Tibial artery (tissue), 4 donors: ENCODE measurements at regions of chr11 and their contacts with region 1.

Region 1: DNA sequence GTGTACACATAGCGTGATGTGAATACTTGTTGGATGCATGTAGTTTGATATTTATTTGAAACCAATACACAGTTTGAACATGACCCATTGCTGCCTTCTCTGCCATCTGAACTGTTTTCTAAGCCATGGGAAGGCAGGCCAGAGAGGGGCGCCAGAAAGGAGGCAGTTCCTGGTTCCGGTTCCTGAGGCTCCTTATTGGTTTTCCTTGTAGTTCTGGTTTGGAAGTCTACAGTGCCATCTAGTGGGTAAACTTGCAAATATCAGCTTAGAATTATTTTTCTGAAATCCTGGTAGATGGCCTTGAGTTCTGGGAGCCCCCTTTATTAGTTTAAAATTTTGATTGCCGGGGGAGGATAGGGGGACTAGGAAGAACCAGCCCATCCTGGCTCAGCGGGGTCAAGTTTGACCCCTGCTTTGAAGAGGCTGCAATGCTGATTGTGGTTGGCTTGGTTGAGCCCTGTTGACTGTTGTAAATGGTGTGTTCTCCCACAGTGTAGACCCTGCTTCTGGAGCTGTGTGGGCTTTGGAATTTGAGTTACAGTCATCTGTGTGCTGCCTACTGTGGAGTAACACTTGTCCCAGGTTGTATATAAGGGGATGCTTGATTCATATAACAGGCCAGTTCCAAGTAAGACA is 48.4 kb downstream of the GRAMD1B start:
- DNase-seq: no peak
- H3K4me3 ChIP-seq: no peak overlapping the region
- H3K27ac ChIP-seq: no peak overlapping the region
- H3K4me1 ChIP-seq: peaks cover 0 to 7% (median 0%) of the 10 kb centered on the region in 4 donors
- H3K27me3 ChIP-seq: no peaks in the 10 kb centered on the region
- CTCF ChIP-seq: peak; percentile 60 to 65

Region 2: DNA sequence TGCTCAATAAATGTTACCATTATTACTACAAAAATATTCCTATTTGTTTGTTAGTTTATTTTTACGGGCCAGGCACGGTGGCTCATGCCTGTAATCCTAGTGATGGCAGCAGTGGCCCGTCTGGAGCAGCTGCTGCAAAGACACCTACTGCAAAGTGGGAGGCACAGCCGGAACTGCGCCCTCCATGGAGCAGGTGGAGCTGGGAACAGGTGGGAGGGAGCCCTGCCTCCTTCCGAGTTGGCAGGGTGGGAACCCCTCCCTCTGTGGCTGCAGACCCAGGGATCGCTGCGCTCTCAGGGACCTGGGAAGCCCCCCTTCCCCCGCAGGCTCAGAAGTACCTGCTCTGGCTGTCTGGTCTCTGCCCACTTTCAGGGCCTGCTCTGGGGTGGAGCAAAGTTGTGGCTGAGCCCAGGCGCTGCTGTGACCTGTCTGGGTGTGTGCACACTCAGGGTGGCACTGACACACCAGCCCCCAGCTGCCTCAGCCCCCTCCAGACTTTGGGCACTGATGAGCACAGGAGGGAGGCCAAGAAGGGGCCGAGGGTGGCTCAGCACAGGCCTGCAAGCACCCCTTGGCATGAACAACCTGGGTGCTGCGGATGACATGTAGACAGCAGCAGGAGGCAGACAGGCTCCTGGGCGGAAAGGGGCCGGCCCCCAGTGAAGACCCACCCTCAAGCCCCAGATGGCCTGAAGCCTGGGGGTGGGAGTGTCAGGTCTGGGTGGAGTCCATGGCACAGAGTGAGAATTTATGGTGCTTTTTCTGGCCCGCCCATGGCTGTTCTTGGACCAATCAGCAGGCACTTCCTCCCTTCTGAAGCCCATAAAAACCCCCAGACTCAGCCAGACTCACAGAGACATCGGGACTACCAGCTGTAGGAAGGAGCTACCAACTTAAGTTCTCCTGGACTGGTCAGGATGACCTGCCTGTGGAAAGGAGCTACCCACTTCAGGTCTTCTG is 179.7 kb before region 1 on chr11:
- intact Hi-C with region 1: loop called (anchors 5 kb)
- DNase-seq: no peak
- H3K4me3 ChIP-seq: no peak overlapping the region
- H3K27ac ChIP-seq: no peak overlapping the region
- H3K4me1 ChIP-seq: peaks cover 0 to 14% (median 13%) of the 10 kb centered on the region in 4 donors
- H3K27me3 ChIP-seq: peaks cover 0 to 48% of the 10 kb centered on the region in 2 donors
- CTCF ChIP-seq: no peak

Region 3: GRCh38 chr11:123511037-123511870 is 32.8 kb after region 1 on chr11:
- intact Hi-C with region 1: no loop called
- DNase-seq: peak; percentile 61 to 75
- H3K4me3 ChIP-seq: no peak overlapping the region
- H3K27ac ChIP-seq: no peak overlapping the region
- H3K4me1 ChIP-seq: no peaks in the 10 kb centered on the region
- H3K27me3 ChIP-seq: peaks cover 0 to 20% of the 10 kb centered on the region in 2 donors
- CTCF ChIP-seq: peak; percentile 57 to 70

Region 4: DNA sequence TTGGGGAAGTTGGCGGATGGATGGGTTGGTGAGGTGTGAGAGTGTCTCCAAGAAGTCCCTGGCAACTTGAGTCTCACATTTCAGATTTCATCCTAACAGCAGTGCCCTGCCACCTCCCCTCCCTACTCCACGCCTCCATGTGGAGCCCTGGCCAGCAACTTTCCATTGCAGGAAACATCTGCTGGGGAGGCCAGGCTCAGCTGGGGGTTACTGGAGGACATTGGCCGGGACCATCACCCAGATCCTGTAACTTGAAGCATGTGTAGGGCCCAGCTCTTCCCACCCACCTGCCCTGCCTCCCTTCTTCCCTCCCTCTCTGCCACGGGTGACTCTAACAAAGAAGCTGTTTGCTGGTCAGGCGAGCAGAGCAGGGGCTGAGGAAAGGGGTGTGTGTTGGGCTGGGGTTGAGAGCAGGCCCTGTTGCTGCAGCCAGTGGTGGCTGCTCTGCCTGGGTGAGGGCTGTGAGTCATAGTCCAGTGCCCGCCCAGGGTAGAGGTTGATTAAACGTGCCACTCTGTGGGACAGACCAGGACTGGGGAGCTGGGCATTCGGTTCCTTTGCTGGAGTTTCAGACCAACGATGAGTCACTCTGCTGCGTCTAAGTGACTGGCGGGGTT is 111.9 kb after region 1 on chr11:
- intact Hi-C with region 1: no loop called
- DNase-seq: no peak
- H3K4me3 ChIP-seq: no peak overlapping the region
- H3K27ac ChIP-seq: no peak overlapping the region
- H3K4me1 ChIP-seq: no peaks in the 10 kb centered on the region
- H3K27me3 ChIP-seq: peaks cover 0 to 8% of the 10 kb centered on the region in 2 donors
- CTCF ChIP-seq: no peak